ENCODE measurements at regions of chr10 and their contacts with region 1.

Region 1: DNA sequence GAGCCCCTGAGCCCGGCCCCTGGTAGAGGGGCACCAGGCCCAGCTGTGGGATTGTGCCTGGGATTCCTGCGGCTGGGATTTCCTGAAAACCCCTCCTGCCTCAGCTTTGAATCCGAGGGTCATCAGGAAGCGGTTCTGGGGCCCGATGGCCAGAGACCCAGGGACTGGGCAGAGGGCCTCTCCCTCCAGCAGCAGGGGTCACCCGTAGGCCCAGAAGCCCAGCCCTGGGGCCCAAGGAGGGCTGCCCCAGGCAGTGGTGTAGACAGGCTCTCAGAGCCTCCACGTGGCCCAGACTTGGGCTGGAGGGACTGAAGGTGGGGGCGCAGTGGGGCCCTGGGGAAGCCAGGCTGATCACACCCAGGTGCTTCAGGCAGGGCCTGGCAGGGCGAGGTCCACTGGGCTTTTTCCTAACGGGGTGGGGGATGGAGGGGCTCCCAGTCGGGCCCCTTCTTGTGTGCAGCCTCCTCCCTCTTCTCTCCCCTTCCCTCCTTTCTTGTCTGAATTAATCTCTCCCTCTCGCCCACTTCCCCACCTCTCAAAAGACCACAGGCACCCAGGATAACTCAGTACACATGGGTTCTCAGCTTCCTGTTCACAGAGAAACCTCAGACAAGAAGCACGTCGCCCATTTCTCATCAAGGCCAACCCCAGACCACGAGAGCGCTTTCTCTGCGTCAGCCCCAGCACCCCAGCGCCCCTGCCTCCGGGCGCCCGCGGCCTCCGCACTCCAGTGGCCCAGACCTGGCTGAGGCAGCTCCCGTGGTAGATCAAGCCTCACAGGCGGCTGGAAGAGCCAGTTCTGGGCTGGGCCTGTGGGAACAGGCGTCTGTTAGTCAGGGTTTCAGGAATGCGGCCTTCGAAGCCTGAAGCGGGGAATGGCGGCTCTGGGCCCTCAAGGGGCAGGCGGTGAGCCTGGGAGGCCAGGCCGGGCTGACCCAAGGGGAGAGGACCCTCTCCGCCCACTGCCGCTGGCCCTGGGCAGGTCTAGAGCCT is 50.5 kb downstream of the PWWP2B start:
- DNase-seq: peak; percentile 75
- ATAC-seq: peak; percentile 26
- H3K4me3 ChIP-seq: 0 out of 2 replicates have a peak overlapping the region, but pooled peaks have one; percentile 16
- H3K27ac ChIP-seq: peak overlapping the region; percentile 98
- H3K4me1 ChIP-seq: peaks cover 29% of the 10 kb centered on the region
- H3K27me3 ChIP-seq: no peaks in the 10 kb centered on the region
- CTCF ChIP-seq: no peak

Region 2: GRCh38 chr10:132421392-132421877 is 26.1 kb before region 1 on chr10:
- CTCF ChIA-PET with region 1: no interaction called
- POLR2A ChIA-PET with region 1: interaction called, 3 read pairs
- intact Hi-C with region 1: loop called (anchors 2 kb)
- DNase-seq: peak; percentile 65
- ATAC-seq: peak; percentile 65
- H3K4me3 ChIP-seq: peak overlapping the region; percentile 40; the same call in 1 of the 2 replicates
- H3K27ac ChIP-seq: peak overlapping the region; percentile 92
- H3K4me1 ChIP-seq: peaks cover 35% of the 10 kb centered on the region
- H3K27me3 ChIP-seq: no peaks in the 10 kb centered on the region
- CTCF ChIP-seq: no peak

Region 3: DNA sequence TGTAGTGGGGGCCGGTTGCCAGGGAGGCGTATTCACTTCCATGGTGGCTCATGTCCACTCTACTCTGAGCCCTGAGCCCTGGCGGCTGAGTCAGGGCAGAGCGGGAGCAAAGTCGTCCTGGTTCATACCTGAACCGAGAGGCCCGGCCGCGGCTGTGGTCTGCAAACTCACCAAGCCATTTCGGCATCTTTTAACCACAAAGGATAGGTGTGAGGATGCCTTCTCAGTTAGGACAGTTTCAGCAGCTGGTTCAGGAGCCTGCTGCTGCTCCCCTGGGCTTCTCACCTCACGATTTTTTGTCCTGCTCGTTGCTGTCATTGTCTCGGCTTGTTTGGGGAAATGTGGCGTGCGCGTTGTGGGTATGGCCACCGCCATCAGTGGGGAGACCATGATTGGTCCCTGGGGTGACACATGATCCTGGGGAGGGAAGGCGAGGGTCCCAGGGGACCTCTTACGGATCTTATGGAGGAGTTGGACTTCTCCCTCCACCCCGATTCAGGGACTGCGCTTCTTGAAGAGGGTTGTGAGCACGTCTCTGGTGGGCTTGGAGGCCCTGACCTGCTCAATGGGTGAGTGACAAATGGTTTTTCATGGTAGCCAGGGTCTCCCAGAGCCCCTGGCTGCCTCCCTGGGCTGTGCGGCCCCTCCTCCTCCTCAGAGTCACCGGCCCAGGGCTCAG is 116.5 kb after region 1 on chr10:
- CTCF ChIA-PET with region 1: no interaction called
- POLR2A ChIA-PET with region 1: no interaction called
- intact Hi-C with region 1: no loop called
- DNase-seq: no peak
- ATAC-seq: 0 out of 2 replicates have a peak, but pooled peaks have one; percentile 13
- H3K4me3 ChIP-seq: no peak overlapping the region
- H3K27ac ChIP-seq: no peak overlapping the region
- H3K4me1 ChIP-seq: peaks cover 17% of the 10 kb centered on the region; the same call in 1 of the 2 replicates
- H3K27me3 ChIP-seq: no peaks in the 10 kb centered on the region
- CTCF ChIP-seq: no peak

Measured in PC-3 (cell line).